MCF 10A (cell line): ENCODE measurements at regions of chr1 and their contacts with region 1.

Region 1: GRCh38 chr1:88983791-88984559 is 8.5 kb downstream of the KYAT3 start:
- DNase-seq: peak; percentile 73
- H3K4me3 Mint-ChIP-seq: peak overlapping the region; percentile 59
- H3K27ac Mint-ChIP-seq: peak overlapping the region; percentile 87
- H3K4me1 Mint-ChIP-seq: peaks cover 37% of the 10 kb centered on the region
- H3K27me3 Mint-ChIP-seq: no peaks in the 10 kb centered on the region
- CTCF ChIP-seq: peak; percentile 53

Region 2: DNA sequence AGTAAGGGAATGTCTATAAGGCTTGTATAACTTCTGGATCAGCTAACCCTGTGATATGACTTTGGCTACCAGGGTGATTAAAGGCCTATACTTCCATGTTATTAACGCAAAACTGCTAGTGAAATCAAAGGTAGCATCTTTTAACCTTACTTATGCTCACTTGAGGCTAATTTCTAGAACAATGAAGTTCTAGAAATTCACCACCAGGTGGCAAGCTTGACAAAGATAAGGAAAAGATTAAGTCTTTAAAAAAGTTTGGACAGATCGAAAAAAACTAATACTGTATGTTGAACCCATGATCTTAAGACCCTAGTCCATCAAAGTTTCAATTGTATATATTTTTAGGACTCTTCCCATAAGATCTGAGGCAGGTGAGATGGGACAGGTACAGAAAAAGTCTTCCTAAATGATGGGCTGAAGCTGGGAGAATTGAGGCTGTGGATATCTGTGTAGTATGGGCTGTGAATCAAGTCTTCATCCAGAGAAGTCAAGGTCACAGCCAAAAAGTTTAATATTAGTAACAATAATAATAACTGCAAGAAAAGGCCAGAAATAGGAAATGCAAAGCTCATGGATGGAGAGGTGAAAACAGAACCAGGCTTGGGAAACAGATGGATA is 10.3 kb before region 1 on chr1:
- CTCF ChIA-PET with region 1: interaction called, 104 read pairs
- POLR2A ChIA-PET with region 1: interaction called, 13 read pairs
- intact Hi-C with region 1: no loop called
- DNase-seq: peak; percentile 53
- H3K4me3 Mint-ChIP-seq: no peak overlapping the region
- H3K27ac Mint-ChIP-seq: no peak overlapping the region
- H3K4me1 Mint-ChIP-seq: peaks cover 10% of the 10 kb centered on the region
- H3K27me3 Mint-ChIP-seq: no peaks in the 10 kb centered on the region
- CTCF ChIP-seq: peak; percentile 57

Region 3: GRCh38 chr1:89022167-89022959 is 38.4 kb after region 1 on chr1 and contains the start of gene GBP3:
- CTCF ChIA-PET with region 1: interaction called, 12 read pairs
- POLR2A ChIA-PET with region 1: interaction called, 35 read pairs
- intact Hi-C with region 1: no loop called
- DNase-seq: peak; percentile 59
- H3K4me3 Mint-ChIP-seq: peak within 1 kb of the TSS; percentile 80
- H3K27ac Mint-ChIP-seq: peak within 1 kb of the TSS; percentile 86
- H3K4me1 Mint-ChIP-seq: peaks cover 15% of the 10 kb centered on the region
- H3K27me3 Mint-ChIP-seq: no peaks in the 10 kb centered on the region
- CTCF ChIP-seq: no peak
- total RNA-seq, gene GBP3: 19.4 and 20.1 TPM in 2 replicates

Region 4: GRCh38 chr1:89085781-89086180 is 101.8 kb after region 1 on chr1:
- CTCF ChIA-PET with region 1: interaction called, 10 read pairs
- POLR2A ChIA-PET with region 1: no interaction called
- intact Hi-C with region 1: loop called (anchors 5 kb)
- DNase-seq: peak; percentile 73
- H3K4me3 Mint-ChIP-seq: no peak overlapping the region
- H3K27ac Mint-ChIP-seq: no peak overlapping the region
- H3K4me1 Mint-ChIP-seq: no peaks in the 10 kb centered on the region
- H3K27me3 Mint-ChIP-seq: no peaks in the 10 kb centered on the region
- CTCF ChIP-seq: peak; percentile 65

Region 5: GRCh38 chr1:89454845-89455521 is 471.0 kb after region 1 on chr1:
- CTCF ChIA-PET with region 1: interaction called, 22 read pairs
- POLR2A ChIA-PET with region 1: interaction called, 7 read pairs
- intact Hi-C with region 1: no loop called
- DNase-seq: peak; percentile 61
- H3K4me3 Mint-ChIP-seq: no peak overlapping the region
- H3K27ac Mint-ChIP-seq: no peak overlapping the region
- H3K4me1 Mint-ChIP-seq: peaks cover 5% of the 10 kb centered on the region
- H3K27me3 Mint-ChIP-seq: no peaks in the 10 kb centered on the region
- CTCF ChIP-seq: peak; percentile 44